ENCODE measurements at regions of chr16 and their contacts with region 1.

Region 1: DNA sequence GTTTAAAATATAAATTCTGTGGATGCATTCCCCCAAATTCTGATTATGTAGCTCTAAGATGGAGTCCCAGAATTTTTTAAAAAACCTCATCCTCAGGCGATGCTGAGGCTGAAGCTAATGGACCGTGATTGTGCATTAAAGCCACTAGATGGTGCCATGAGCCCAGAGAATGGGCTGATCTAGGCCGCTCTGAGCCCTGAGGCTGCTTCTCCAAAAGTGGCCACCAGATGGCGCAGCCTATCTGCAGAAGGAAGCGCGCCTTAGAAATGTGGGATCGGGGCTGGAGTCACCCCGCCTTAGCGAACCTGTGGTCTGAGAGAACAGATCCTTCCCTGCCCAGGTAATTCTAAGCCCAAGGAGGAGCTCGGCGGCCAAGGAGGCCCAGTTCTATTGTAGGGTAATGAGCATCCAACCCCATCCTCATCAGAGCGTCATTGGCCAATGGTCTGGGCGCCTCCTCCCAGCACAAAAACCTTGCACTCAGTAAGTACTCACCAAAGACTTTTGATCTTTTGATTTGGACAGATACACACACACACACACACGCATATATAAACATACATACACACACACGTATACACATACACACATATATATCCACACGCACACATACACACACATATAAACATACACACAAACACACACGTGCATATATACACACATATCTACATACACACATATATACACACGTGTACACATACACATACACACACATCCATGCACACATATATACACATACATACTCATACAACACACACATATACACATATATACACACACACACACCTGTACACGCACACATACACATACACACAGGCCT is 13.7 kb upstream of the MMP2 start:
- DNase-seq: peak; percentile 87 to 92
- H3K4me3 ChIP-seq: peak overlapping the region in 1 of 3 donors; percentile 34
- H3K27ac ChIP-seq: no peak overlapping the region
- H3K4me1 ChIP-seq: no peaks in the 10 kb centered on the region
- H3K27me3 ChIP-seq: no peaks in the 10 kb centered on the region
- CTCF ChIP-seq: peak; percentile 100
- POLR2A ChIP-seq: no peak

Region 2: DNA sequence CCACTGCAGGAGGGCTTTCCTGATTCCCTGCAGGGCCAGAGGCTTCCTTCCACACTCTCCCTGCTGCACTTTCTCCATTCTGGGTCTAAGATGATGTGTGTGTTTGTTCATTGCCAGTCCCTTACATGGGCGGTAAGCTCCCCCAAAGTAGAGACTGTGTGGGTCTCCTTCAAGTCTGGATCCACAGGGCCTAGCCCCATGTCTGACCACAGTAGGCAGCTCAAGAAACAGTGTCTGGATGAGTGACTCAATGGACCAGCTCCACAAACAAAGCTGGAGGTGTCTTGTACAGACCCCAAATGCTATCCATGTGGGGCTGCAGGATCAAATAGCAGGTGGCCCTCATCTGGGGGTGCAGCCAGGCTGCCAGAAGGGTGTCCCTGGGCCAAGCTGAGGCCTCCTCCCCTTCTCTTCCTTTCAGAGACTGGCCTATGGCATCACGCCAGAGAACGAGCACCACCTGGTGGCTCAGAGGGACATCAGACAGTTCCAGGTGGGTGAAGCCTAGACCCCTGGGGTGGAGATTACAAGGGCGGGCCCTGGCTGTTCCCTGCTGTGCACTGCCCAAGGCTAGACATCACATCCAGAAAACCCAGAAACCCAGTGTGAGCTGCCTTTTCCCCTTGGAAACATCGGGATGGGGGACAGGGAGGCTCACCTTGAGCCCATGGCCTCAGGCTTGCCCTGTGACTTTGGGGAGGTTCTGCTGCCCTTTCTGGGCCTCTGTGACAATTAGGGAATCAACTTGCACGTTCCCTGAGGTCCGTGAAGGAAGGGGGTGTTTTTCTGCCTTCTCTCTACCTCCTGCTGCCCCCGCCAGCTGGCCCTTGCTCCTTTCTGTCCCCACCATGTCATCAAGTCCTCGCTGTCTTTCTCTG is 236.4 kb after region 1 on chr16:
- intact Hi-C with region 1: loop called (anchors 10 kb)
- DNase-seq: peak in 1 of 2 donors; percentile 28
- H3K4me3 ChIP-seq: no peak overlapping the region
- H3K27ac ChIP-seq: no peak overlapping the region
- H3K4me1 ChIP-seq: no peaks in the 10 kb centered on the region
- H3K27me3 ChIP-seq: no peaks in the 10 kb centered on the region
- CTCF ChIP-seq: peak in 2 of 3 donors; percentile 62 to 67
- POLR2A ChIP-seq: no peak

Region 3: DNA sequence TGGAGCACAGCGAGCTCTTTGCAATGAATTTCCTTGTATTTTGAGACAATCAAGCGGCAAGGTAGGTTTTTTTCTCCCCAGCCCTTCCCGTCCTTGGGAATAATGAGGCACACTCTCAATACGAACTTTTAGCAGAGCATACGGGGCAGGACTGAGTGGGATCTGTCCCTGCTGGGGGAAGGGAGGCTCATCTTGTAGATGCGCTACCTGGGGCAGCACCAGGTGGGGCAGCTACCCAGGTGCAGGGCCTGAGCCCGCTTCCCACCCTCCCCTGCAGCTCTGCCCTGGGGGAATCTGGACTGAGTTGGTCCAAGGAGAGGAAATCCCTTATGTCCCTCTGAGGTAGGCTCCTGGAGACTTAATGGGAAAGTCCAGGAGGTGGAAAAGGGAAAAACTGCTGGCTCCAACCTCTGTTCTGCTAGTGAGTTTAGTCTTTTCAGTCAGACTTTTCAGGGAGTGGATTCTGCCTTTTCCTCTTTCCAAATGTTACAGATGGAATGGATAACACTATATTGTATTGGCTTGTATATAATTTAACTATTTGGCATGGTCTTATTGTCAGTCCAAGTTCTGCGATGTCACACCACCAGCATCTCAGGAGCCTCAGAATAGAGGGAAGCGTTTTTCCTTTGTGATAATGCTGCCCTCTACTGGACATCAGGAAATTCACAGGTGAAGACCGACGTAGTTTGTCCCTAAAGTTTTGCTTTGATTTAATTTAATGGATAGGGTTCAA is 377.2 kb after region 1 on chr16:
- intact Hi-C with region 1: loop called (anchors 10 kb)
- DNase-seq: no peak
- H3K4me3 ChIP-seq: no peak overlapping the region
- H3K27ac ChIP-seq: no peak overlapping the region
- H3K4me1 ChIP-seq: no peaks in the 10 kb centered on the region
- H3K27me3 ChIP-seq: peaks cover 0 to 10% of the 10 kb centered on the region in 2 donors
- CTCF ChIP-seq: peak; percentile 65 to 76 (median 75)
- POLR2A ChIP-seq: no peak

Region 4: DNA sequence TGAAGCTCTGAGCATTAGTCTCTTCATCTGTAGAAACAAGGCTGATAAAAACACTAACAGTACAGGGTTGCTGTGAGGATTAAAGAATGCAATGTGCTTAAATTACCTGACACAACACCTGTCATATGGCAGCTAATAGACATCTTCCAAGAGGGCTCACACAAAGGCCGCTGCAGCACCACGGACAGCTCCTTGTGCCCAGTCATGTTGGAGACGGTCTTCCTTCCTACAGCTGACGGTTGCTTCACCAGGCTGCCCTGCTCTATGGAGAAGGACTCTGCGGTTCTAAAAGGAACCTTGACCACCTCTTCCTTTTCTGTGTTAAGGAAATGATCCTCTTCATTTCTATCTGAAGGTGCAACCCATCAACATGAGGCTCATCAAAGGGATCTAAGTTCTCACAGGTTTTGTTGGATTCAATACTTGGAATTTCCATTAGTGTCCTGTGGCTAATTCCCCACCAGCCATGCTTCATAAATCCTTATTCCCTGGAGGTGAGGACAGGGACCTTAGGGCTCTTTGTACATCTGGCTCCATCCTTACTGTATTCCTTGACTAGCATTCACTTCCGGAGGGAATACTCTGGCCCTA is 548.8 kb after region 1 on chr16:
- intact Hi-C with region 1: loop called (anchors 5 kb)
- DNase-seq: no peak
- H3K4me3 ChIP-seq: no peak overlapping the region
- H3K27ac ChIP-seq: no peak overlapping the region
- H3K4me1 ChIP-seq: no peaks in the 10 kb centered on the region
- H3K27me3 ChIP-seq: peaks cover 0 to 17% of the 10 kb centered on the region in 2 donors
- CTCF ChIP-seq: no peak
- POLR2A ChIP-seq: no peak

Measured in breast epithelium (tissue), 4 donors.